ENCODE measurements at regions of chr17 and their contacts with region 1.

Region 1: DNA sequence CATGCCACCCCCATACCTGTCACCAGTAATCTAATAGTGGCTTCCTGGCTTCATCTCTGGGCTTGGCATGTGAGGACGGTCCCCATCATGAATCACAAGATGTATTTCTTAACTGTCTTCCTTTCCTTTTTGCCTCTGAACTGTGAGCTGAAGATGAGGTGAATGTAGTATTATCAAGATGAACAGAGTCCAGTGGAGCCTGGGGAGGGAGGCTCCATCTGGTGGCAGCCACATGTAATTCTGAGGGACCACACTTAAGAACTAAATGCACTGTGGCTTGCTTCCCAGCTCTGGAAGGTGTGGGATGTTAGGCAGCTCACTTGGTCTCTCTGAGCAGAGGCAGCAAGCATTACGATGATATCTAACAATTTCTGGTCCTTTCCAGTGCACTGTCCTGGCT is 354.9 kb upstream of the ASIC2 start:
- DNase-seq: no peak
- H3K4me3 ChIP-seq: no peak overlapping the region
- H3K27ac ChIP-seq: no peak overlapping the region
- H3K4me1 ChIP-seq: peaks cover 0 to 4% (median 1%) of the 10 kb centered on the region in 4 experiments; a peak in 2 of 7 replicates
- H3K27me3 ChIP-seq: no peaks in the 10 kb centered on the region
- CTCF ChIP-seq: peak; percentile 66 to 78 (median 67)
- EP300 ChIP-seq: no peak
- POLR2A ChIP-seq: no peak
- RAD21 ChIP-seq: peak; percentile 64 to 74

Region 2: DNA sequence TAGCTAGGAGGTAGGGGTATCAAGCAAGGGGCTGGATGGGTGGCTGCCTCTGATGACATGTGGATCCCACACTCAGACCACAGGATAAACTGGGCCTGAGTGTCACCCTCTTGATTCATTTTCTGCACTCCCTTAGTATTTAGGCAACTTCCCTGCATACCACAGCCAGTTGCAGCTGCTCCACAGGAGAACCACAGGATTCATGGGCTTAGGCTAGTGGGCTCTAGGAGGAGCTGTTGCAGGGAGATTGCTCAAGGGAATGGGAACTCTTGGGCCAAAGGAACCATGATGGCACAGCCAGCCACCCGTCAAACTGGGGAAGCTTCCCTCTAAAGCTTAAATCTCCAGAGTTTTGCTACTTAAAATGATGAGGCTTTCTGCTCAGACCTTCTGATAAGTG is 85.2 kb before region 1 on chr17:
- CTCF ChIA-PET with region 1: interaction called, 26 read pairs
- POLR2A ChIA-PET with region 1: no interaction called
- DNase-seq: no peak
- H3K4me3 ChIP-seq: no peak overlapping the region
- H3K27ac ChIP-seq: no peak overlapping the region
- H3K4me1 ChIP-seq: no peaks in the 10 kb centered on the region
- H3K27me3 ChIP-seq: no peaks in the 10 kb centered on the region
- CTCF ChIP-seq: peak; percentile 24 to 58 (median 53); a peak in 3 of 4 replicates
- EP300 ChIP-seq: no peak
- POLR2A ChIP-seq: no peak
- RAD21 ChIP-seq: peak; percentile 44 to 68

Region 3: DNA sequence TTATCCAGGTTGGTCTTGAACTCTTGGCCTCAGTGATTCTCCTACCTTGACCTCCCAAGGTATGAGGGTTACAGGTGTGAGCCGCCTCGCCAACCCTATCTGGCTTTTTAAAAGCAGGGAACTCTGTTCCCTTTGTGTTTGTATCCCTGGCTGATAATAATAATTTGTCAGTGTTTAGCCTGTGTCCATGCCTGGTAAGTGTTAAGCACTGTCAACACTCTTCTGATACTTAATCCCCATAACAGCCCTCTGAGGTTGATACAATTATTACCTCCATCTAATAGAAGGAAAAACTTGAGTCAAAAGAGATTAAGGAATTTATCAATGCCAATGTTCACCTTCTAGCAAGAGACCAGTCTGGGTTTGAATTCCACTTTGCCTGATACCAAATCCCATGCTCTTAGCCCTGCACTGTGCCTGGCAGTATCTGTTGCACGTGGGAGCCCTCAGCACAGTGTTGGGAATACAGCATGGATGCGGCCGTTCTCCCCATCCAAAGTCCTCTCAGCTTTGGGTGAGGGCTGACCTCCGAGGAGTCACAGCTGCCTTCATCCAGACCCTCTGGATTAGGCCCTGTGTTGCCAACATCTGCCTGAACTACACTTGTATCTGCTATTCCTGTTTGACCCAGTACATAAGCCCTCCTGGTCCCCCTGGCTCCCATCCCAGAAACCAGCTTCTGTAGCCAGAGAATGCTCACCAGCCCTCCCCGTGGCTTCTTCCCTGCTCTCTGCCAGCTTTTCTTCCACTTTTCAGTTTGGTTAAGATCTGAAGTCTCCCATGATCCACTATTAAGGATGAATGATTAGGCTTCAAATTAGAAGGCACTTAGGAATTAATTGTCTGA is 19.2 kb before region 1 on chr17:
- CTCF ChIA-PET with region 1: interaction called, 15 read pairs
- POLR2A ChIA-PET with region 1: no interaction called
- DNase-seq: no peak
- H3K4me3 ChIP-seq: no peak overlapping the region
- H3K27ac ChIP-seq: no peak overlapping the region
- H3K4me1 ChIP-seq: no peaks in the 10 kb centered on the region
- H3K27me3 ChIP-seq: no peaks in the 10 kb centered on the region; a peak in 1 of 7 replicates
- CTCF ChIP-seq: no peak
- EP300 ChIP-seq: no peak
- POLR2A ChIP-seq: no peak
- RAD21 ChIP-seq: no peak

Region 4: DNA sequence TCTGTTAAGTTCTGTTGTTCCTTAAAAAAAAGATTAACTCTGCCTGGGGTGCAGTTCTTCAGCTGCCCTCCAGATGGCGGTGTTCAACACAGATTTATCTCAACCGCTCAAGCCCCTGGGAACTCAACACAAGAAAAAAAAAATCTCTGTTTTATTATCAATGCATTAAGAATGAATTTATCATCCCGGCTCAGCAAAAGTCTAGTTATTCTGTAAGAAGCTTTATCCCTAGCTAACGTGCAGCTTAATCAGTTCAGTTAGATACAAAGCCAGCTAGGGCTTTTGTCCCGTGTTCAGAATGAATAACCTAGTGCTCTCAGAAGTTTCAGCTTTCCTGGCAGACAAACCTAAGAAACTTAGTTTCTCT is 131.3 kb after region 1 on chr17:
- CTCF ChIA-PET with region 1: no interaction called
- POLR2A ChIA-PET with region 1: no interaction called
- DNase-seq: peak; percentile 3 to 70
- H3K4me3 ChIP-seq: no peak overlapping the region
- H3K27ac ChIP-seq: no peak overlapping the region
- H3K4me1 ChIP-seq: no peaks in the 10 kb centered on the region
- H3K27me3 ChIP-seq: no peaks in the 10 kb centered on the region
- CTCF ChIP-seq: peak; percentile 55 to 81 (median 76)
- EP300 ChIP-seq: no peak
- POLR2A ChIP-seq: no peak
- RAD21 ChIP-seq: peak; percentile 89 to 90

Measured in H1 (cell line).